Breast epithelium (tissue), 4 donors: ENCODE measurements at regions of chr20 and their contacts with region 1.

Region 1: DNA sequence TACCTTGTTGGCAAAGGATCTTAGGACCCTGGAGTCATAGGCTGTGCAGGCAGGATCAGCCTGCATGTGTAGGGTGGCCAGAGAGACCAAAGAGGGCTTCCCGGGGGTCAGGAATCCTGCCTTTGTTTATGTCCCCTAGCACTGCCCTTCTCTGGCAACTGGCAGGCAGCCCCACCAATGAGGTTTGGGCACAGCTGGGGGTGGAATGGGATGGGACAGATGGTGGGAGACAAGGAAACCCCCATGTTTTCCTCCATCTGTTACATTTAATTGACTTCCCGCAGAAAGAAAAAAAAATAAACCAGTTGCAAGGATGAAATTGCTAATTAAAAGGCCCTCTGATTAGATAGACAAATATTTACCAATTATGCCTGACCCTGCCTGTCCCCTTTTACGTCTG is 27.6 kb downstream of the CD40 start:
- DNase-seq: no peak
- H3K4me3 ChIP-seq: no peak overlapping the region
- H3K27ac ChIP-seq: no peak overlapping the region
- H3K4me1 ChIP-seq: no peaks in the 10 kb centered on the region
- H3K27me3 ChIP-seq: peaks cover 0 to 18% of the 10 kb centered on the region in 2 donors
- CTCF ChIP-seq: no peak
- POLR2A ChIP-seq: no peak

Region 2: DNA sequence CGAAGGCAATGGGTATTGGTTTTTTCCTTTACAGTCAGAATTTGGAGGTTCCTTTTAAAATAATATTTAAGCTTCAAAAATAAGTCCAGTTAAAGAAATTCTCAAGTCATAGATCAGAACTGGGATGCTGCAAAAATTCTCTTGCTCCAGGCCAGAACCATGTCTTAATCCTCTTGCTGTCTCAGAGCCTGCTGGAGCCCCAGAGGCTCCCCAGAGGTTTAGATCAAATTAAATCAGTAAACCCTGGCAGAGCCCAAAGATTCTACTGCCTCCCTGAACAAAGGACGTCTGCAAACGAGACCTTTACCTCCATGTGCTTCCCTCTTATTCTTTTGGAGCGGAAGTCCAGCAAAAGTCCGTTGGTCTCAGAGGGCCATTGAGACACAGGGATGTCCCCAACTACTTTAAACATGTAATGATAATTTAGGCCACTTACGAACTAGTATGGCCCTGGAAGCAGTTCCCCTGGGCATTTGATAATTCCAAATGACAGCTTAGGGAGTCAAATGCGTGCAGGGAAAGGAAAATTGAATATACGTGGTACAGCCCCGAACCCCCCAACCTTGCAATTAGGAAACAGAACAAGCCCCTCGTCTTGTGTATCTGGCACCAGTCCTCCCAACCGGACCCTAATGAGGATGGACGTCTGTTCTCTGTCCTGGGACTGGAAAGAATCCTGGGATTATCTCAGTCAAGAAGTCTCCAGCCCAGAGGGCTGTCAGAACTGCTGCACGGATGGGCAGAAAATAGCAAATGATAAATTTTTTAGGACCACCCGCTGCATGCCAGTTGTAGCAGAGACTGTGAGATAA is 1608.1 kb after region 1 on chr20:
- intact Hi-C with region 1: loop called (anchors 5 kb)
- DNase-seq: no peak
- H3K4me3 ChIP-seq: no peak overlapping the region
- H3K27ac ChIP-seq: no peak overlapping the region
- H3K4me1 ChIP-seq: no peaks in the 10 kb centered on the region
- H3K27me3 ChIP-seq: no peaks in the 10 kb centered on the region
- CTCF ChIP-seq: no peak
- POLR2A ChIP-seq: no peak